Panc1 (cell line): ENCODE measurements at regions of chr5 and their contacts with region 1.

Region 1: DNA sequence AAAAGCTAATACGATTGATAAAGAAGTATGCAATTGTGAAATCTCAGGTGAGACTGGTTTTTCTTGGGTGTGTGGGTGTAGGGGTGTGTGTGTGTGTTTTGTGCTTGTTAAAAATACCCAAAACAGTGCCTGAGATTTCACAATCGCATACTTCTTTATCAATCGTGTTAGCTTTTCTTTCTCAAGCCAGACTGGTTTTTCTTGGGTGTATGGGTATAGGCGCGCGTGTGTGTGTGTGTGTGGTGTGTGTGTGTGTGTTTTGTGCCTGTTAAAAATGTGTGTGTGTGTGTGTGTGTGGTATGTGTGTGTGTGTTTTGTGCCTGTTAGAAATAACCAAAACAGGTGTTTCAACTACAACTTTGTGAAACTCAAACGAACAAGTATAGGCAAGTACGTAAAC is 53.7 kb downstream of the CERT1 start:
- DNase-seq: no peak
- ATAC-seq: no peak
- H3K4me3 ChIP-seq: no peak overlapping the region
- H3K27ac ChIP-seq: no peak overlapping the region
- H3K4me1 ChIP-seq: peaks cover 5% of the 10 kb centered on the region; the same call in 1 of the 2 replicates
- H3K27me3 ChIP-seq: no peaks in the 10 kb centered on the region
- CTCF ChIP-seq: no peak

Region 2: GRCh38 chr5:73471654-73472053 is 1986.0 kb before region 1 on chr5:
- CTCF ChIA-PET with region 1: no interaction called
- POLR2A ChIA-PET with region 1: interaction called, 11 read pairs
- in situ Hi-C with region 1: no loop called
- intact Hi-C with region 1: no loop called
- DNase-seq: no peak
- ATAC-seq: no peak
- H3K4me3 ChIP-seq: no peak overlapping the region
- H3K27ac ChIP-seq: no peak overlapping the region
- H3K4me1 ChIP-seq: no peaks in the 10 kb centered on the region
- H3K27me3 ChIP-seq: no peaks in the 10 kb centered on the region
- CTCF ChIP-seq: no peak

Region 3: GRCh38 chr5:76175051-76175666 is 717.5 kb after region 1 on chr5:
- CTCF ChIA-PET with region 1: no interaction called
- POLR2A ChIA-PET with region 1: no interaction called
- in situ Hi-C with region 1: no loop called
- intact Hi-C with region 1: no loop called
- DNase-seq: peak; percentile 46
- ATAC-seq: peak; percentile 84
- H3K4me3 ChIP-seq: no peak overlapping the region
- H3K27ac ChIP-seq: no peak overlapping the region
- H3K4me1 ChIP-seq: no peaks in the 10 kb centered on the region
- H3K27me3 ChIP-seq: no peaks in the 10 kb centered on the region
- CTCF ChIP-seq: peak; percentile 90